ENCODE measurements at regions of chr18 and their contacts with region 1.

Region 1: DNA sequence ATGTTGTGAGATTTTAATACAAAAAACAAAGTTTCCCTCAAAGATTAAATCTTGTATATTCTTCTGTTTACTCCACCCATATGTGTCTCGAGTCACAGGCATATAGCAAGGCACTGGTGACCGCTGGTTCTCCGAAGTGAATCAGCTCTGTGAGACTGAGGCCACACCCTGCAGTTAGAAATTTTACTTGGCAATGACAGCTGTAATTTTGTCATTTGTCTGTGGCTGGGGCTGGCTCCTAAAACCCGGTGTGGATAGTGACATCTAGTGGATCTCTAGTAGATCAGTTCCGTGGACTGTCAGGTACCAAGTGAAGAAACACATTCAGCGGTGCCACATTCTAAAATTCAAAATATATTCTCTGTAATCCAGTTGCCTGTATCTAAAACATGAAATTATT is 278.0 kb downstream of the NEDD4L start:
- DNase-seq: peak in 4 of 5 donors; percentile 66 to 79 (median 74)
- ATAC-seq: peak; percentile 70 to 95 (median 94)
- H3K4me3 ChIP-seq: peak overlapping the region in 5 of 12 donors; percentile 3 to 35 (median 19)
- H3K27ac ChIP-seq: peak overlapping the region in 8 of 12 donors; percentile 9 to 69 (median 44)
- H3K4me1 ChIP-seq: peaks cover 0 to 30% (median 13%) of the 10 kb centered on the region in 12 donors
- H3K27me3 ChIP-seq: no peaks in the 10 kb centered on the region
- CTCF ChIP-seq: peak in 11 of 12 donors; percentile 50 to 83 (median 65)
- POLR2A ChIP-seq: no peak

Region 2: DNA sequence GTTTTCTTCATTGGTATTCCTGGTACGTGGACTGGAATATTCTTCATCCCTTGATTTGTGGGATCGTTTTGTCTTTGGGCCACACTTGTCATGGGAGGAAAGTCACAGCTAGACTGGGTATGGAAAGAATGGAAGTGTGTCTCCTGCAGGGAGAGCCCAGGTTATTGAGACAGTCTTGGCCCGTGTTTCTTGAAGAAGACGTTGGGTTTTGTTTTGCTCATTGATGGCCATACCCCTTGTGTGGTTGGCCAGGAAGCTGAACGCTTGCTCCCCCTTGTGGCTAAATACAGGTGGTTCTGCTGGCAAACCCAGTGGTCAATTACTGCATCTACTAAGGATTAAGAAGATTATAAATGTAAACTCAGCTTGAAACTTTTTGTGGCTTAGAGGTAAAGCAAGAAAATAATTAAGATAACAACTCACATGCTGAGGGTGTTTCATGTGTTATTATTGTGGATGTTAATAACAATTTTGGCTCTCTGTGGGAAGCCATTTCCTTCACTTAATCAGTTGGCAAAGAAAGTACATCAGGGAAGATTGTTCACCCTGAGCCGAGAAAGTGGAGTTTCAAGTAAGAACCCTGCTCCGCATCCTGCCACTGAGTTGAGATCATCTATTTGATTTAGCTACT is 186.2 kb before region 1 on chr18:
- intact Hi-C with region 1: loop called in 2 of 10 experiments (anchors 10 kb)
- DNase-seq: peak in 3 of 5 donors; percentile 29 to 38 (median 33)
- ATAC-seq: peak; percentile 29 to 83 (median 60)
- H3K4me3 ChIP-seq: no peak overlapping the region
- H3K27ac ChIP-seq: no peak overlapping the region
- H3K4me1 ChIP-seq: peaks cover 0 to 7% (median 0%) of the 10 kb centered on the region in 12 donors
- H3K27me3 ChIP-seq: no peaks in the 10 kb centered on the region
- CTCF ChIP-seq: peak; percentile 67 to 87 (median 80)
- POLR2A ChIP-seq: no peak

Region 3: DNA sequence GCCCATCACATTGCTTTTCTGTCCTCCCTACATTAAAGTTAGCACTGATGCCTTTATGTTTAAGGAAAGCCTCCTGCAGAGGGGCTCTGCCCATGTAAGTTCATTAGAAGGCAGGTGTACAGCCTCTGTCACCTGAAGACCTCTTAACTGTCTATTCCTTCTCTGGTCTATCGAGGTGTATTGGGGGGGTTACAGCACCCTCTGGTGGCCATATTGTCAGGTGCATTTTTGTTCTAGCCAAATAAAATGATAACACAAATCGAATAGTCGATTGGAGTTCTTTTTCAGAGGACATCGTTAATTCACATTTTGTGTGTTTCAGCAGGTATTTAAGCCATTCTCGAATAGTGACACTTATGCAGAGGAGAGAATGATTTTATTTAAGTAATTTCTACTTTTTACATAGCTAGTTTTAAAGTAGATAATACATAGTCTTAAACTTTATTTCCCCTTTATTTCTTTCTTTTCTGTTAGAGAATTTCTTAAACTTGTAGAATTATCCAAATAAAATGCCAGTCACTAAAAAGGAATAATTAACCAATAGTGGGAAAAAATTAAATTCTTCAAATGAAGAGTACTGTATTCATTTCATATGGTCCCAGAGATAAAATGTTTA is 141.1 kb before region 1 on chr18:
- intact Hi-C with region 1: loop called in 5 of 10 experiments (anchors 5 kb)
- DNase-seq: peak in 1 of 5 donors; percentile 31
- ATAC-seq: peak in 2 of 4 donors; percentile 43
- H3K4me3 ChIP-seq: no peak overlapping the region
- H3K27ac ChIP-seq: no peak overlapping the region
- H3K4me1 ChIP-seq: peaks cover 0 to 8% (median 0%) of the 10 kb centered on the region in 12 donors
- H3K27me3 ChIP-seq: no peaks in the 10 kb centered on the region
- CTCF ChIP-seq: peak; percentile 76 to 94 (median 88)
- POLR2A ChIP-seq: no peak

Region 4: DNA sequence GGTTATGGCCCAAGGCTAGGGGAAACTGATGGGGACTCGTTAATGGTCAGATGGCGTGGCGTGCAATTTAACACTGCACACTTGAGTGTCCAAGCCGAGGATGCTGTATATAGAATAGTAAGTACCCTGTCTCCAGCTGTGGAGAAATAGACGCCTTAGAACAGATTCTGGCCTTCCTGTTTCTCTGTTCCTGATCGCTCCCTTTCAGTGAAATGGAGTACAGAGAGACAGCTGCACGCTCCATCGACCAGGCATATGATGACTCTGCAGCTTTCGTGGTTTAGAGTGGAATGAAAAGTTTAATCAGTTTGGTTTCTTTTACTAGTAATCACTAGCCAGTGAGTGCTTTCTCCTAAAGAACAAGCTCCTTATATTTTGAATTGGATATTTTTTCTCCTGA is 64.5 kb before region 1 on chr18:
- intact Hi-C with region 1: loop called in 3 of 10 experiments (anchors 5 kb)
- DNase-seq: no peak
- ATAC-seq: peak; percentile 8 to 24 (median 15)
- H3K4me3 ChIP-seq: peak overlapping the region; percentile 27 to 61 (median 53)
- H3K27ac ChIP-seq: peak overlapping the region; percentile 62 to 87 (median 80)
- H3K4me1 ChIP-seq: peaks cover 0 to 20% (median 0%) of the 10 kb centered on the region in 12 donors
- H3K27me3 ChIP-seq: no peaks in the 10 kb centered on the region
- CTCF ChIP-seq: no peak
- POLR2A ChIP-seq: no peak